ENCODE measurements at regions of chr22 and their contacts with region 1.

Region 1: DNA sequence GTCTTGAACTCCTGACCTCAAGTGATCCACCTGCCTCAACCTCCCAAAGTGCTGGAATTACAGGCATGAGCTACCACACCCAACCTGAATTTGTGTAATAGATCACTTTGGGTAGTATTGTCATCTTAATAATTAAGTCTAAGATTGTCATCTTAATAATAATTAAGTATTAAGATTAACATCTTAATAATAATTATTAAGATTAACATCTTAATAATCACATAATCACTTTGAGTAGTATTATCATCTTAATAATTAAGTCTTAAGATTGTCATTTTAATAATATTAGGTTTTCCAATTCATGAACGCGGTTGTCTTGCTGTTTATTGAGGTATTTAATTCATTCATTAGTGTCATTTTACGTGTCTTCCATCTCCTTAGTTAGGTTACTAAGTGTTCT is 8.2 kb downstream of the MOV10L1 start:
- DNase-seq: no peak

Region 2: GRCh38 chr22:49889071-49889470 is 209.0 kb before region 1 on chr22:
- intact Hi-C with region 1: loop called in 1 of 2 experiments (anchors 5 kb)
- DNase-seq: no peak